B cell (primary cell): ENCODE measurements at regions of chrX and their contacts with region 1.

Region 1: DNA sequence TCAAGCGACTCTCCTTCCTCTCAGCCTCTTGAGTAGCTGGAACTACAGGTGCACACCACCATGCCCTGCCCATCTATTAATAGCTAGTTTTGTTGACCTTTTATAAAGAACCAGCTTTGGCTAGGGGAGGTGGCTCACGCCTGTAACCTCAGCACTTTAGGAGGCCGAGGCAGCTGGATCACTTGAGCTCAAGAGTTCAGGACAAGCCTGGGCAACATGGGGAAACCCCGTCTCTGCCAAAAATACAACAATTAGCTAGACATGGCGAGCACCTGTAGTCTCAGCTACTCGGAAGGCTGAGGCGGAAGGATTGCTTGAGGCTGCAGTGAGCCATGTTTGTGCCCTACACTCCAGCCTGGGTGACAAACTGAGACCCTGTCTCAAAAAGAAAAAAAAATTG is 2.7 kb downstream of the TKTL1 start:
- DNase-seq: peak; percentile 73
- ATAC-seq: peak; percentile 87
- H3K4me3 ChIP-seq: no peak overlapping the region
- H3K4me3 Mint-ChIP-seq: peak overlapping the region; percentile 19
- H3K27ac ChIP-seq: peak overlapping the region; percentile 47 to 67
- H3K27ac Mint-ChIP-seq: peak overlapping the region; percentile 82
- H3K4me1 ChIP-seq: peaks cover 9 to 15% of the 10 kb centered on the region in 2 donors
- H3K4me1 Mint-ChIP-seq: peaks cover 19% of the 10 kb centered on the region
- H3K27me3 ChIP-seq: no peaks in the 10 kb centered on the region
- H3K27me3 Mint-ChIP-seq: no peaks in the 10 kb centered on the region
- CTCF ChIP-seq: no peak

Region 2: DNA sequence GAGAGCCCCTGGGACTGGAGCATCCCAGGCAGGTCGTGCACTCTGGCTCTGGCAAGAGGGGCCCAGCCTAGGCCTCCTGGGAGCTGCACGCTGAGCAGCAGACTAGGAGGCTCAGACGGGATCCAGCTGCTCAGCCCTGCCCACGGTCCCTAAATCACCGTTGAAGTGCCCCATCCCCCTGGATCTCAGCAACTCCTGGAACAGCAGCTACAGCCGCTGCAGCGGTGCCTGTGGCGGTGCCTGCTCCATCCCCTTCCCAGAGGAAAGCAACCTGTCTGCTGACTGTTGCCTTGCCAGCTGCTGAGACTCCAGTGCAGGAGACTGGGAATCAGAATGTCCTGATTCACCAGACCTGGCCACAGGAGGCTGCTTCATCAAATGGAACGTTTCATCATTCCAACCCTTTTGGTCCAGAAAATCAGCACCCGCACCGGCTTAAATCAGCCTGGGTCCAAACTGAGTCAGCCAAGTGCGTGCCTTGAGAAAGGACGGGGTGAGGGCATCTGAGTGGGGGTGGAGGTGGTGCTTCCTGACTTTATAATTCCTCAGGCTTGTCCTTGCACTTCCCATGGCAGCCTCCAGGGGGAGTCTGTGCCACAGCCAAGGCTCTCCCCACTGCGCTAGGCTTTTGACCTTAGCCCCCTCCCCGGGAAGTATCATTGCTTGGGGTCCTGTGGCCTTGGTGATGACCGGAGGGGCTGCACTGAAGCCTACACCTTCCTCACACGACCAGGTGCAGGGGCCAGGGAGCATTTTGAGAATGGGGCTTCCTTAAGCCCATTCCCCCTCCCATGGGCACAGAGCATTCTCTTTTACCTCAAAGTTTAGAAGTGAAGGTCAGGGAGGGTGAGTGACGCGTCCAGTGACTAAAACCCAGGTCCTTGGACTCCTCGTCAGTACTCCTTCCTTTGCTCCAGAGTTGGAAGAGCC is 1393.9 kb before region 1 on chrX:
- CTCF ChIA-PET with region 1: no interaction called
- POLR2A ChIA-PET with region 1: no interaction called
- intact Hi-C with region 1: no loop called
- DNase-seq: peak; percentile 40
- ATAC-seq: no peak
- H3K4me3 ChIP-seq: no peak overlapping the region
- H3K4me3 Mint-ChIP-seq: no peak overlapping the region
- H3K27ac ChIP-seq: no peak overlapping the region
- H3K27ac Mint-ChIP-seq: no peak overlapping the region
- H3K4me1 ChIP-seq: no peaks in the 10 kb centered on the region
- H3K4me1 Mint-ChIP-seq: no peaks in the 10 kb centered on the region
- H3K27me3 ChIP-seq: peaks cover 0 to 2% (median 0%) of the 10 kb centered on the region in 4 experiments
- H3K27me3 Mint-ChIP-seq: peaks cover 19% of the 10 kb centered on the region
- CTCF ChIP-seq: peak; percentile 54

Region 3: DNA sequence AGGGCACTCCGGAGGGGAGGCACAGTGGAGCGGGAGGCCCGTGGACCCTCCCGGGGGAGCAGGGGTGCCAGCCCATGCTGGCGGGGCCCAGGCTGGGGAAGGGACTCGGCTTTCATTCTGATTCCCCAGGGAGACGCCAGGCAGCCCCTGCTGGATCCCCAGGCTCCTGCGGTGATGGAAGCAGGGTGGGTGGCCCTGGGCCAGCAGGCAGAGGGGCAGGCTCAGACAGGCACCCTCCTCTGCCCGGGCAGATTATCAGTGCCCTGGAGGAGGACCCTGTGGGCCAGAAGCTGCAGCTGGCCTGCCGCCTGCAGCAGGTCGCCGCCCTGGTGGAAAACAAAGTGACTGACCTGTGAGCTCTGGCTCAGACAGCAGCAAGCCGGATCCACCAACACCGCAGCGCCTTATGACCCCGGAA is 519.6 kb before region 1 on chrX:
- CTCF ChIA-PET with region 1: no interaction called
- POLR2A ChIA-PET with region 1: no interaction called
- intact Hi-C with region 1: no loop called
- DNase-seq: no peak
- ATAC-seq: no peak
- H3K4me3 ChIP-seq: no peak overlapping the region
- H3K4me3 Mint-ChIP-seq: no peak overlapping the region
- H3K27ac ChIP-seq: no peak overlapping the region
- H3K27ac Mint-ChIP-seq: no peak overlapping the region
- H3K4me1 ChIP-seq: no peaks in the 10 kb centered on the region
- H3K4me1 Mint-ChIP-seq: peaks cover 4% of the 10 kb centered on the region
- H3K27me3 ChIP-seq: peaks cover 0 to 2% (median 0%) of the 10 kb centered on the region in 4 experiments
- H3K27me3 Mint-ChIP-seq: peaks cover 7% of the 10 kb centered on the region
- CTCF ChIP-seq: no peak

Region 4: DNA sequence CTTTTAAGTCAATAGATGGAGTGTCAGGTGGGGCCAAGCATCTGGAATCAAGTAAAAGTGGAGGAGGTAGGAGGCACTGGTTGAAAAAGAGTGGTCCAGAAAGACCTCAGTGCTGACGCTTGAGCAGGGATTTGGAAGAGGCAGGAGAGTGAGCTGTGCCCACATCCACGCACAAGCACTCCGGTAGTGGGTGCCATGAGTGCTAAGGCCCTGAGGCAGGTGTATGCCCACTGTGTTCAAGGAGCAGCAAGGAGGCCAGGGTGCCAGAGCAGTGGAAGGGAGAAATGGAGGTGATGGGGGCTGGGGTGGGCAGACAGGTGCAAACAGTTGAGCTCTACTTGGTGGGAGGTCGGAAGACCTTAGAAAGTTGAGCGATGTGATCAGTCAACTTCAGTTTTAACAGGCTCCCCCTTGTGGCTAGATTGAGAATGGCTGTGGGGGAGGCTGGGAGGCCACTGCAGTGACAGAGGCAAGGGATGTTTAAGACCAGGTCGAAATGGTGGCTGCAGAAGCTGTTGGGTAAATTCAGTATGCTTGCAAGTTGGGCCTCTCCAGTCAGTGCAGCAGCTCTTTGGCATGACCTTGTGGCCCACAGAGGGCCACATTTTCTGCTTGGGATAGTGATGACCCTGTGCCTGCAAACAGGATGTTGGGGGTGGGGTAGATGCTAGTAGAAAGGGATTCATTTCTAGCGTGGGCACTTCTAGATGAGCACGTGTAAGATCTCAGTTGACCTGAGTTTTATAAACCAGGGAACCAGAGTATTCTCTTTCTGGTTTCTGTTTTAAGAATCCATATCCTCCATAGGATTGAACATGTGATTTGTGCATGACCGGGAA is 10.0 kb after region 1 on chrX:
- CTCF ChIA-PET with region 1: interaction called, 16 read pairs
- POLR2A ChIA-PET with region 1: interaction called, 3 read pairs
- intact Hi-C with region 1: no loop called
- DNase-seq: peak; percentile 84
- ATAC-seq: peak; percentile 78
- H3K4me3 ChIP-seq: no peak overlapping the region
- H3K4me3 Mint-ChIP-seq: peak overlapping the region; percentile 39
- H3K27ac ChIP-seq: no peak overlapping the region
- H3K27ac Mint-ChIP-seq: peak overlapping the region; percentile 63
- H3K4me1 ChIP-seq: peaks cover 34 to 43% of the 10 kb centered on the region in 2 donors
- H3K4me1 Mint-ChIP-seq: peaks cover 42% of the 10 kb centered on the region
- H3K27me3 ChIP-seq: no peaks in the 10 kb centered on the region
- H3K27me3 Mint-ChIP-seq: no peaks in the 10 kb centered on the region
- CTCF ChIP-seq: peak; percentile 67